Activated CD4-positive, alpha-beta memory T cell treated with anti-CD3 and anti-CD28 coated beads for 36 hours (primary cell): ENCODE measurements at regions of chr5 and their contacts with region 1.

Region 1: DNA sequence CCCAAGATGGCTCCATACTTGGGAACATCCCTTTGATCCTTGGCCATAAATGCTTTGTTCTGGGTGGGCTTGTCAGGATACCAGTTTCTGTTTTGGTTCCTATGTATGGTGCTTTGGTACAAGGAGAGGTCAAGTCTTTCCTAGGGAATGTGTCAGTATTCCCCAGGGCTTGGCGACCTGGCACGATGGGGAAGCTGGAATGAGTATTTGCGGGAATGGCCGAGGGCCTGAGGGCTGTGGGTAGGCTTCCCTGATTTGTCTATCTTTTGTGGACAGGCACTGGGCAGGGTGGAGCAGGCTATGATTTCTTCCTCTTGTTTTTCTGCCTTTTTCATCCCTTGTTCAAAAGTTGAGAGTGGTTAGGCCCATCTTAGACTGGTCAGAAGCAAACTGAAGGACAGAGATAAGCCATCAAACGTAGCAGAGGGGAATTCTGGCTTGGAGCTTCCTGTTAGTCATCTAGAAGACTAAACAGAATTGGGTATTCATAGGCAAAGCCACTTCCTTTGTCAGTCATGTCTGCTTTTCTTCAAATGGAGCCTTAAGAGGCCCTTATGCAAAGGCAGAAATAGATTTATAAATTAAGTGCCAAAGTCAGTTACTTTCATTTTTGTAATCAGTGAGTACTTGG is 13.7 kb downstream of the DOCK2 start:
- DNase-seq: no peak
- H3K4me3 Mint-ChIP-seq: peak overlapping the region; percentile 55
- H3K27ac Mint-ChIP-seq: peak overlapping the region; percentile 95
- H3K4me1 Mint-ChIP-seq: peaks cover 98% of the 10 kb centered on the region
- H3K27me3 Mint-ChIP-seq: no peaks in the 10 kb centered on the region

Region 2: GRCh38 chr5:169637085-169637548 is 13.7 kb before region 1 on chr5 and contains the start of gene DOCK2:
- CTCF ChIA-PET with region 1: interaction called, 4 read pairs
- POLR2A ChIA-PET with region 1: interaction called, 16 read pairs
- intact Hi-C with region 1: loop called (anchors 1 kb)
- DNase-seq: peak; percentile 81
- H3K4me3 Mint-ChIP-seq: peak within 1 kb of the TSS; percentile 85
- H3K27ac Mint-ChIP-seq: peak within 1 kb of the TSS; percentile 90
- H3K4me1 Mint-ChIP-seq: peaks cover 48% of the 10 kb centered on the region
- H3K27me3 Mint-ChIP-seq: peaks cover 1% of the 10 kb centered on the region
- total RNA-seq, gene DOCK2: 191 to 205 TPM

Region 3: GRCh38 chr5:169701910-169702451 is 51.2 kb after region 1 on chr5:
- CTCF ChIA-PET with region 1: no interaction called
- POLR2A ChIA-PET with region 1: interaction called, 3 read pairs
- intact Hi-C with region 1: loop called (anchors 1 kb)
- DNase-seq: no peak
- H3K4me3 Mint-ChIP-seq: no peak overlapping the region
- H3K27ac Mint-ChIP-seq: peak overlapping the region; percentile 60
- H3K4me1 Mint-ChIP-seq: peaks cover 41% of the 10 kb centered on the region
- H3K27me3 Mint-ChIP-seq: no peaks in the 10 kb centered on the region

Region 4: GRCh38 chr5:169805527-169805934 is 154.7 kb after region 1 on chr5:
- CTCF ChIA-PET with region 1: no interaction called
- POLR2A ChIA-PET with region 1: interaction called, 4 read pairs
- intact Hi-C with region 1: loop called (anchors 1 kb)
- DNase-seq: peak; percentile 83
- H3K4me3 Mint-ChIP-seq: peak overlapping the region; percentile 39
- H3K27ac Mint-ChIP-seq: peak overlapping the region; percentile 87
- H3K4me1 Mint-ChIP-seq: peaks cover 57% of the 10 kb centered on the region
- H3K27me3 Mint-ChIP-seq: no peaks in the 10 kb centered on the region